Dorsolateral prefrontal cortex (tissue), 120 donors: ENCODE measurements at regions of chr10 and their contacts with region 1.

Region 1: DNA sequence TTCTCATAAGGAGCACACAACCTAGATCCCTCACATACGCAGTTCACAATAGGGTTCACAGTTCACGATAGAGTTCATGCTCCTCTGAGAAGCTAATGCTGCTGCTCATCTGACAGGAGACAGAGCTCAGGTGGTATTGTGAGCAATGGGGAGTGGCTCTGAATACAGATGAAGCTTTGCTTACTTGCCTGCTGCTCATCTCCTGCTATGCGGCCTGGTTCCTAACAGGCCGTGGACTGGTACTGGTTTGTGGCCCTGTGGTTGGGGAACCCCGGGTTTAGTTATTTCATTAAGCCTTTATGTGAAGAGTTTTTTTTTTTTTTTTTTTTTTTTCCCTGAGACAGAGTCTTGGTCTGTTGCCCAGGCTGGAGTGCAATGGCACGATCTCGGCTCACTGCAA is 19.4 kb downstream of the SLK start:
- DNase-seq: no peak
- H3K4me3 ChIP-seq: no peak overlapping the region
- H3K27ac ChIP-seq: peak overlapping the region in 7 of 59 donors; percentile 3 to 70 (median 53)
- H3K27me3 ChIP-seq: no peaks in the 10 kb centered on the region
- CTCF ChIP-seq: no peak

Region 2: DNA sequence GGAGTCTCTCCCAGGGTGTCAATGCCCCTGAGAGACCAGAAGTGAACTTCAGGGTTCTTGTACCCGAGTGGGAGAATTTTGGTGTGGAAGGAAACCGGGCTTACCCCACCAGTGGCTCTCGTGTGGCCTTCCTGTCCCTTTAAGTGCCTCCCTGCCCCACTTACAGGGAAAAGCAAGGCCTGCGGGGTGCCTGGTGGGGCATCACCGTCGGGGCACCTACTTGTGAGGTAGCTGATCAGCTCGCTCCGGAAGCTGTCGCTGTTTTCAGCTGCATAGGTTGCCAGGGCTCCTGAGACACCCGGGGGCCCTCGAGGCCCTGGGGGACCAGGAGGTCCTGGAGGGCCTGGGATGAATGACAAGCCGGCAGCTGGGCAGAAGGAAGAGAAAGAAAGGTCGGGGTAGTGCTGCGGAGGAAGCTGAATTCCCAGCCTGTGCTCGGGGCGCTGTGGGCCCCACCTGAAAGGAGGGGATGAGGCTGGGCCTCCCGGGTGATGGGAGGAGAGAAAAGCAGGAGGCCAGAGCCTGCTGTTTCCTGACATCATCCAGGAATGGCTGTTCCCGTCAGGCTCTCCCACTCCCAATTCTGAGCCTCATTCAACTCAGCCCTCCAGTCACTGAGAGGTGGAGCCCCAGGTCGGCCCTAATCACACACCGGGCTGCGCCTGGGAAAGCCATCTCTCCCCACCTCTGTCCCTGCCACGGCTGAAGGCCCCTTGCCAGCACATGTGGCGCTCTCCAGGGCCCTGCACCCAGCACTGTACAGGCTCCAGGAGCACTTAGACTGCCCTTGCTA is 48.2 kb after region 1 on chr10:
- intact Hi-C with region 1: loop called in 1 of 2 experiments (anchors 5 kb)
- DNase-seq: no peak
- H3K4me3 ChIP-seq: no peak overlapping the region
- H3K27ac ChIP-seq: peak overlapping the region in 51 of 59 donors; percentile 18 to 93 (median 77)
- H3K27me3 ChIP-seq: no peaks in the 10 kb centered on the region
- CTCF ChIP-seq: no peak